Activated T-helper 1 cell treated with anti-CD3 and anti-CD28 coated beads, Interleukin-12 subunit alpha, Interleukin-12 subunit beta, Interleukin-2, Interleukin-4 antibody, amounts not matched to agents 30 ng/mL and 10 ng/mL and 1 ng/mL, durations not matched to agents 14 hours and 24 hours and 36 hours (primary cell): ENCODE measurements at regions of chr1 and their contacts with region 1.

Region 1: GRCh38 chr1:101002551-101002950 is 23.0 kb downstream of the DPH5 start:
- DNase-seq: no peak
- H3K4me3 Mint-ChIP-seq: no peak overlapping the region
- H3K27ac Mint-ChIP-seq: no peak overlapping the region
- H3K4me1 Mint-ChIP-seq: peaks cover 43% of the 10 kb centered on the region
- H3K27me3 Mint-ChIP-seq: no peaks in the 10 kb centered on the region

Region 2: DNA sequence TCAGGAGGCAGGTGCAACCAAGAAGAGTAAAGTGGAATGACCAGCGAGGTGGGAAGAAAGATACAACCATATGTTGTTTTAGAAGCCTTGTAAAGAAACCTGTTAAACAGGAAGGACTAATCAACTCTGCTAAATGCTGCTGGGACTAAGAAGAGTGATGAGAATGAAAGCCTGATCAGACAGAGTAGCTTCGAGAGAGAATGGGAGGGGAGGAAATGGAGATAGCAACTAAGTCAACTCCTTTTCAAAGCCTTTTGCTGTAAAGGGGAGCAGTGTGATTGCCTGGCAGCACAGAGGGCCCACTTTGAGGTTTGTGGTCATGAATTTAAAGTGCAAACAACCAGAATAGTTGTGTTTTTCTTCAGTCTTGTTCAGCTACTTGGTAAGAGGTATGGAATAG is 75.3 kb before region 1 on chr1:
- intact Hi-C with region 1: loop called (anchors 5 kb)
- DNase-seq: peak; percentile 48
- H3K4me3 Mint-ChIP-seq: no peak overlapping the region
- H3K27ac Mint-ChIP-seq: no peak overlapping the region
- H3K4me1 Mint-ChIP-seq: peaks cover 47% of the 10 kb centered on the region
- H3K27me3 Mint-ChIP-seq: no peaks in the 10 kb centered on the region

Region 3: DNA sequence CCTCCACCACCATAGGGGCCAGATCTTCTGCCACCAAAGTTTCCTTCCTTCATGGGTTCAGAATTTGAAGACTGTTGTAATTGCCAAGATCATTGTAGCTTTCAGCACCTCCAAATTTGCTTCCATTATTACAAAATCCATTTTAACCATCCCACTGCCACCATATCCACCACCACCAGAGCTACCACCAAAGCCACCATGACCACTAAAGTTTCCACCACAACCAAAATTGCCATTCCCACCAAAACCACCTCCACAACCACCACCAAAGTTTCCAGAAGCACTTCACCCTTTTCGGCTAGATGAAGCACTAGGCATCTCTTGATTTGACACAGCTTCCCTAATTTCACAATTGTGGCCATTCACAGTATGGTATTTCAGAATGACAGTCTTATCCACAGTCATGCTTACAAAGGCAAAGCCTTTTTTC is 61.4 kb before region 1 on chr1:
- intact Hi-C with region 1: loop called (anchors 5 kb)
- DNase-seq: peak; percentile 17
- H3K4me3 Mint-ChIP-seq: peak overlapping the region; percentile 58
- H3K27ac Mint-ChIP-seq: peak overlapping the region; percentile 99
- H3K4me1 Mint-ChIP-seq: peaks cover 37% of the 10 kb centered on the region
- H3K27me3 Mint-ChIP-seq: peaks cover 3% of the 10 kb centered on the region